ENCODE measurements at regions of chr20 and their contacts with region 1.

Region 1: GRCh38 chr20:54065601-54066038 is 4.8 kb downstream of the BCAS1 start:
- DNase-seq: no peak
- H3K4me3 ChIP-seq: no peak overlapping the region
- H3K27ac ChIP-seq: no peak overlapping the region
- H3K27me3 ChIP-seq: peaks cover 4% of the 10 kb centered on the region
- CTCF ChIP-seq: no peak

Region 2: DNA sequence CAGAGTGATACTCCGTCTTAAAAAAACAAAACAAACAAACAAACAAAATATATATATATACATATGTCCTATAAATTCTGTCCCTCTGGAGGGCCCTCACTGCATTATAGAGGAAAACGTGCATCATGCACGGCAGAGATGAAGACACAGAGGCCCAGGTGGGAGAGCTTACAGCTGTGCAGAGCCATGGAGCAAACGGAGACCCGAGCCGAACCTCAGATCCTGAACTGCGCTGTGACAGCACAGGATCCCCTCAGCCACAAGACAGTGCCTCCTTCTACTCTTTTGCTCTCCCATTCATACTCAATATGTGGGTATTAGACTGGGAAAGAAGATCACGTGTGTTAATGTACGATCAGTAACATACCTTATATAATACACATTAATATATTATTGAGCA is 553.5 kb before region 1 on chr20:
- CTCF ChIA-PET with region 1: no interaction called
- POLR2A ChIA-PET with region 1: interaction called, 10 read pairs
- DNase-seq: no peak
- H3K4me3 ChIP-seq: no peak overlapping the region
- H3K27ac ChIP-seq: no peak overlapping the region
- H3K27me3 ChIP-seq: no peaks in the 10 kb centered on the region
- CTCF ChIP-seq: no peak

Region 3: DNA sequence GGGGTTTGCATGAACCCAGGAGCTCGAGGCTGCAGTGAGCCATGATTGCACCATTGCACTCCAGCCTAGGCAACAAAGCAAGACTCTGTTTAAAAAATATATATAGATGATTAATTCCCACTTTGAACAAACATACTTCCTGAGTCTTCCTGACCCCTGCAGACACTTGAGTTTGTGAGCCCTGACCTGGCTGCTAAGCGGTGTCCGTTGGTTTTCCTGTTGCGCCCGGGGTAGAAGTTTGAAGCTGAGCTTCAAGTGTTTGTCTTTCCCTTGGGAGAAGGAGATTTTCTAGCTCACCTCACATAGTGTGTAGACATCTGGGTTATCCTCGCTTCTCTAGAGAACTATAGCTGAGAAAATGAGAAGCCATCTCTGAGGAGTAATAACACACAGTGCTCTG is 16.5 kb after region 1 on chr20:
- CTCF ChIA-PET with region 1: no interaction called
- POLR2A ChIA-PET with region 1: no interaction called
- DNase-seq: no peak
- H3K4me3 ChIP-seq: no peak overlapping the region
- H3K27ac ChIP-seq: no peak overlapping the region
- H3K27me3 ChIP-seq: peaks cover 3% of the 10 kb centered on the region
- CTCF ChIP-seq: no peak